ENCODE measurements at regions of chr2 and their contacts with region 1.

Region 1: DNA sequence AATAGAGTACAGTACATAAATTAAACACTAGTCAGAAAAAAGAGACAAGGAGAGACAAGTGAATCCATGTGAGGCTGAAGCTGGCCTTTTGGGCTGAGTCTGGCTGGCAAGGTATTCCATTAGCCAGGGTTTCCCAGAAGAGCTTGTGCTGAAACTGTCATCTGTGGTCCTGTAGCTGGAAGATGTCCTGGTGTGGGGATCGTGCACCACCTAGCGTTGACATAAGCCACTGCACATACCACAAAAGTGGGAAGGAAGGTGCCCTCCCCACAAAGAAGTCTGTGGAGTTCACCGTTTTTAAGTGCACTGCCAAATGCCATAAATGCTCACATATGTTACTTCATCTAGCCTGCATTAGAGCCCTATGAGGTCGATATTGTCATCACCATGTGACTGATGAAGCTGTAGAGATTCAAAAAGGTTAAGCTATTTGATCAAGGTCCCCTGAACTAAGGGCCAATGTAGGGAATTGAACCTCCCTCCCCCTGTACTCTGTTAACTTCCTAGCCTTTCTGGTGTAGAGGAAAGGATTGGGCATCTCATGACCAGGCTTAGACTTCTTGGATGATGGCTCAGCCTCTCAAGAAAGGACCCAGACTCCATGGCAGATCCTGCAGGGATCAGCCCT is 31.9 kb upstream of the GALNT14 start:
- DNase-seq: peak in 8 of 9 experiments; percentile 18 to 69 (median 40)
- ATAC-seq: peak; percentile 58
- H3K4me3 ChIP-seq: no peak overlapping the region
- H3K4me3 Mint-ChIP-seq: no peak overlapping the region
- H3K27ac ChIP-seq: no peak overlapping the region
- H3K27ac Mint-ChIP-seq: no peak overlapping the region
- H3K4me1 ChIP-seq: no peaks in the 10 kb centered on the region
- H3K4me1 Mint-ChIP-seq: no peaks in the 10 kb centered on the region
- H3K27me3 ChIP-seq: no peaks in the 10 kb centered on the region
- H3K27me3 Mint-ChIP-seq: no peaks in the 10 kb centered on the region
- CTCF ChIP-seq: peak; percentile 80

Region 2: DNA sequence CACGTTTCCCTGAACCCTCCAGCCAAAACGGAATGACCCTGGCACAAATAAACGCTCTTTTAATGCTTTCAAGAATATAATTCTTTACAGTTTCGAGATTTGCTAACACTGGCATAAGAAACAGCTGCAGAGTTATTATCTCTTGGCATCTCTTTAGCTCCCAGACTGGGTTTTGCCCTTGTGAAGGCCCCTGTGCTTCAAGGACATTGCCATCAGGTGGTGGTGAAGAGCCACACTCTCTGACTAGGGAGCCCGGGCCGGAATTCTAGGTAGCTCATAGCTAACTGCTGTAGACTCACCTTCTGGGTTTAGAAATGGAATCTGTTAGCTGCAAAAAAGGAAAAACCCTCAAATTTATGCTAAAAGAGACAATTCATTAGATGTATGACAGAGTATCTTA is 18.7 kb before region 1 on chr2:
- CTCF ChIA-PET with region 1: interaction called, 15 read pairs
- POLR2A ChIA-PET with region 1: no interaction called
- intact Hi-C with region 1: no loop called
- DNase-seq: no peak
- ATAC-seq: no peak
- H3K4me3 ChIP-seq: no peak overlapping the region
- H3K4me3 Mint-ChIP-seq: no peak overlapping the region
- H3K27ac ChIP-seq: no peak overlapping the region
- H3K27ac Mint-ChIP-seq: no peak overlapping the region
- H3K4me1 ChIP-seq: no peaks in the 10 kb centered on the region
- H3K4me1 Mint-ChIP-seq: no peaks in the 10 kb centered on the region
- H3K27me3 ChIP-seq: no peaks in the 10 kb centered on the region
- H3K27me3 Mint-ChIP-seq: peaks cover 2% of the 10 kb centered on the region
- CTCF ChIP-seq: no peak

Region 3: GRCh38 chr2:31363956-31364750 is 194.0 kb after region 1 on chr2:
- CTCF ChIA-PET with region 1: no interaction called
- POLR2A ChIA-PET with region 1: no interaction called
- intact Hi-C with region 1: no loop called
- DNase-seq: no peak
- ATAC-seq: no peak
- H3K4me3 ChIP-seq: no peak overlapping the region
- H3K4me3 Mint-ChIP-seq: no peak overlapping the region
- H3K27ac ChIP-seq: no peak overlapping the region
- H3K27ac Mint-ChIP-seq: no peak overlapping the region
- H3K4me1 ChIP-seq: no peaks in the 10 kb centered on the region
- H3K4me1 Mint-ChIP-seq: no peaks in the 10 kb centered on the region
- H3K27me3 ChIP-seq: no peaks in the 10 kb centered on the region
- H3K27me3 Mint-ChIP-seq: peaks cover 2% of the 10 kb centered on the region
- CTCF ChIP-seq: no peak

Measured in CD8-positive, alpha-beta T cell (primary cell).